ENCODE measurements at regions of chr1 and their contacts with region 1.

Region 1: GRCh38 chr1:12124693-12125421 is 41.9 kb upstream of the TNFRSF1B start:
- DNase-seq: no peak
- H3K4me3 ChIP-seq: no peak overlapping the region
- CTCF ChIP-seq: peak; percentile 84

Region 2: GRCh38 chr1:11982010-11982392 is 142.9 kb before region 1 on chr1:
- CTCF ChIA-PET with region 1: no interaction called
- POLR2A ChIA-PET with region 1: no interaction called
- DNase-seq: no peak
- H3K4me3 ChIP-seq: no peak overlapping the region
- CTCF ChIP-seq: peak; percentile 20

Region 3: DNA sequence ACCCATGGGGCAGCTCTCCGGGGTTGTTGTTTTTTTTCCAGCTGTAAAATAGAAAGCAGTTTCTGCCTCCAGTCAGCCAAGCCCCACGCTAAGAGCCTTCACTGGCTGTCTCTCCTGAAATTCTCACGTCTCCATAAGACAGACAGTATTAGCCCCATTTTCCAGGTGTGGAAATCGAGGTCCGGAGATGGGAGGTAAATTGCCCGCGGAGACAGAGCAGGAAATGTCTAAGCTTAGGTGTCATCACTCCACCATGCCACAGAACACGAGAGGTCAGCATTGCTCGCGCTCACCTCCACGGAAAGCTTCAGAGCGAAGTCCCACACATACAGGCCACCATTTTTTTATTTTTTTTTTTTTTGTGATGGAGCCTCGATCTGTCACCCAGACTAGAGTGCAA is 17.1 kb before region 1 on chr1:
- CTCF ChIA-PET with region 1: interaction called, 33 read pairs
- POLR2A ChIA-PET with region 1: no interaction called
- DNase-seq: no peak
- H3K4me3 ChIP-seq: no peak overlapping the region
- CTCF ChIP-seq: no peak

Region 4: DNA sequence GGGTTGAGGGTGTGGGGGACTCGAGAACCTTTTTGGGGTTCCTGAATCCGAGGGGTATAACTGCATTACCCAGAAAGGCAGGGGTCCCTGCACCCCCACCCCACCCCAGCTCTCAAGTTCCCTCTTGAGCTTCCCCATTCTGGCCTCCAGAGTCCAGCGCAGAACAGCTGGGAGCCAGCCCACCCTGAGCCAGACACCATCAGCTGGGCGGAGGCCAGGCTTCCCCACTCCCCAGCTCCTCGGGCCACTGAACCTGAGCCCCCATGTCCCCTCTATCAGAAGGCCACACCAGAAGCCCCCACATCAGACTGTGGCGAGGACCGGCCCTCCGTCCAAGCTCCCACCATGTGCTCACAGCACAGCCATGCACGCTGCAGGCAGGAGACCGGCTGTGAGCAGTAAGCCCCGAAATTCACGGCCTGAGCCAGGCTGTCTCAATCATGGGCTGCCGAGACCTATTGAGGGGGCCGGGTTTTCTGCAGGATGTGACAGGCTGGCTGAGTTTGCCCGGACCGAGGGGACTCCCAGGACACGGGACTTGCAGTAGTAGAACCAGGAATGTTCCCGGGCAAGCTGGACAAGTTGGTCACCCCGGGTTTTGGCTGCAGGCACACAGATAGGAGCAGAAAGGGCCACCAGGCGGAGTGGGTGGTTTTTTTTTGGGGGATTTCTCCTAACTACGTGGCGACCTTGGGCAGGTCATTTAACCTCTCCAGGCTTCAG is 16.4 kb after region 1 on chr1:
- CTCF ChIA-PET with region 1: interaction called, 61 read pairs
- POLR2A ChIA-PET with region 1: no interaction called
- DNase-seq: no peak
- H3K4me3 ChIP-seq: no peak overlapping the region
- CTCF ChIP-seq: no peak

Region 5: DNA sequence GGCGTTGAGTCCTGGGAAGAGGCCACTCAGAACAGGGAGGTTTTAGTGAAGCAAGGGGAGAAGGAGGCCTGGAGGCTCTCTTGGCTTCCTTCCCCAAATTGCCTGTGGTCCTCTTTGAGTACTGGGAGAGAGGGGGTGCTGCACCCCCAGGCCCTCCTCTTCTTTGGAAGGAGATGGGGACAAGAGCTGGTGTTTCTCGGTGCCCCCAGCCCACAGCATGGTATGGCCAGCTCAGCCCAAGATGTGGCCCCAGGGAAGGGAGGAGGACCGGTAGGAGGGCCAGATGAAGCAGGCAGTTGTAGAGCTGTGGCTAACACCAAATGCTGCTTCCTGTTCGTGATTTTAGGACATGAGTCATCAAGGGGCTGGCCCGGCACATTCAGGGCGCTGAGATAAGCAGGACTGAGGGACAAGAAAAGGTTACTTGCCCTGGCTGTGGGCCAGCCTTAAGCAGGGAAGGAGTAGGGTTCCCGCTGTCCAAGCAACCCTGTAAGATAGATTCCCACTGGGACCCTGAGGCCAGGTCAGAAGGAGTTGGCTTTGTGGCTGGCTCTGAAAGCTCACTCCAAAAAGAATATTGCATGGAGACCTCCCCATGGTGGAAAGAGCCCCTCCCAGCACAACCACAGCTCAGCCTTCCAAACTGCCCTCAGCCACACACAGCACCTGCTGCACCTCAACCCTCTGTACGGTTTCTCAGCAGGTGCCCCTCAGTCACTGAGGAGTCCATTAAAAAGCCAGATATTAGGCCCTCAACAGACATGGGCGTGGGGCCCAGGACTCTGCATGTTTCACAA is 37.0 kb after region 1 on chr1:
- CTCF ChIA-PET with region 1: interaction called, 31 read pairs
- POLR2A ChIA-PET with region 1: no interaction called
- DNase-seq: peak; percentile 45
- H3K4me3 ChIP-seq: no peak overlapping the region
- CTCF ChIP-seq: no peak

Region 6: GRCh38 chr1:12184008-12184681 is 59.3 kb after region 1 on chr1:
- CTCF ChIA-PET with region 1: interaction called, 31 read pairs
- POLR2A ChIA-PET with region 1: no interaction called
- DNase-seq: peak; percentile 23
- H3K4me3 ChIP-seq: no peak overlapping the region
- CTCF ChIP-seq: peak; percentile 33

Region 7: DNA sequence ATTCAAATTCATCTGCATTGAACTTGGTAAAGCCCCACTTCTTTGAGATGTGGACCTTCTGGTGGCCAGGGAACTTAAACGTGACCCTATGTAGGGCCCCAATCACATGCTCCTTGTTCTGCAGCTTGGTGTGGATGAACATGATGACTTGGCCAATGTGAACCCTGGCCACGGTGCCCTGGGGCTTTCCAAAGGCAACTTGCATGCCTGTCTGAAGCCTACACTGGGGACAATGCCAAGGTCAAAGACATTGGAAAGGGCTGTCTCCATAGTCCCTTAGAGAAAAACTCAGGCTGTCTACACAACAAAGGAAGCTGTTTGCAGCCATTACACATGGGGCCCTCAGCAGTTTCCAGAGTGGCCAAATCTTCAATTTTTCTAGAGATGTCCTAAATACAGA is 96.0 kb after region 1 on chr1:
- CTCF ChIA-PET with region 1: interaction called, 730 read pairs
- POLR2A ChIA-PET with region 1: no interaction called
- DNase-seq: no peak
- H3K4me3 ChIP-seq: no peak overlapping the region
- CTCF ChIP-seq: no peak

Region 8: DNA sequence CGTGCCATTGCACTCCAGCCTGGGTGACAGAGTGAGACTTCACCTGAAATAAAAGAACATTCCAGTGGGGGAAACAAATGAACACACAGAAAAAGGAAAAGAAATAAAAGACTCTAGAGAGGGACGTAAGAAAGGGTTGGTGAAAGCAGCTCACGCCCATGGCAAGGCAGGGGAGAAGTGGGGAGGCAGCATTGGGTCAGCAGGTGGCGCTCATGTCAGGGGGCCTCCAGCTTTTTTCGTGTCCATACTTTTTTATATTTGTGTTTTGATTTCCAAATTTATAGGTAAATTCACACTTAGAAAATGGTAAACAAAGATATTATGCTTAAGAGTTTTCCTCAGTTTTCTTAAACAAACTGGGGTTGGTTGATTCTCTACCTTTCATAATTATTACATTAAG is 150.5 kb after region 1 on chr1:
- CTCF ChIA-PET with region 1: interaction called, 24 read pairs
- POLR2A ChIA-PET with region 1: no interaction called
- DNase-seq: no peak
- H3K4me3 ChIP-seq: no peak overlapping the region
- CTCF ChIP-seq: peak; percentile 78